ENCODE measurements at regions of chr21 and their contacts with region 1.

Region 1: GRCh38 chr21:44962403-44962966 is 22.7 kb downstream of the SLX9 start:
- DNase-seq: no peak
- H3K4me3 ChIP-seq: no peak overlapping the region
- H3K27ac ChIP-seq: no peak overlapping the region
- H3K4me1 ChIP-seq: peaks cover 26% of the 10 kb centered on the region
- H3K27me3 ChIP-seq: no peaks in the 10 kb centered on the region
- CTCF ChIP-seq: no peak
- EP300 ChIP-seq: no peak
- POLR2A ChIP-seq: no peak

Region 2: GRCh38 chr21:44817506-44817880 is 145.0 kb before region 1 on chr21:
- intact Hi-C with region 1: no loop called
- DNase-seq: peak; percentile 92 to 96 (median 94)
- H3K4me3 ChIP-seq: peak overlapping the region; percentile 59
- H3K27ac ChIP-seq: peak overlapping the region in 1 of 2 donors; percentile 93
- H3K4me1 ChIP-seq: peaks cover 14% of the 10 kb centered on the region
- H3K27me3 ChIP-seq: no peaks in the 10 kb centered on the region
- CTCF ChIP-seq: no peak
- EP300 ChIP-seq: no peak
- POLR2A ChIP-seq: no peak

Region 3: DNA sequence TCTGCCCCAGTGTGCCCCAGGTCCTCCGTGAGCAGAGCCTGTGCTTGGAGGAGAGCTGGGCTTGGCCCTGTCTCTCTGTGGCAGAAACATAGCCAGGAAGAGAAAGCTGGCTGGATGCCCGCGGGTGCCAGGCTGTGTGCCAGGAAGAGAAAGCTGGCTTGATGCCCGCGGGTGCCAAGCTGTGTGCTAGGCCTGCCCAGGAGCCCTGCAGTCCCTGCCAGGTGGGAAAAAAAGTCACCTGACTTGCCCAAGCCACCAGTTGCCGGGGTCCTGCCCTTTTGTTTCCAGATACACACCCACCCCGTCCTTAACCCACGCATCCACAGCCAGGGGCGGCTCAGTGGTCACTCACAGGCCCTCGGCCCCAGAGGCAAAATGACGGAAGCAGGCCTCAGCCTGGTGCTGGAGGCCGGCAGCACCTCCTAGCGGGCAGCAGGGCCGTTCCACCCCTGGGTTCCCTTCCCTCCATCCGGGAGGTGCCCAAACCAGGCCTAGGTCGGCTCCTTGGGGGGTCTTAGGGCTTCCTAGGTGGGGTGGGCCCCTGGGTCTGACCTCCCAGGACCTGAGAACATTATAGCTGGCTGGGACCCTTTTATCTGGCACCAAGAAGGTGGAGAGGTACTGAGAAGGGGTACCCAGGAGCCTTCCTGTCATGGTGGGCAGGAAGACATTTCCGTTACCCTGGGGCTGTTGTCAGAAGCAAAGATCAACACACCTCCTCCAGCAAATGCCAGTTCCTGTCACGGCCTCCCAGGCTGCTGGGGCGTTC is 50.9 kb before region 1 on chr21:
- intact Hi-C with region 1: no loop called
- DNase-seq: peak in 2 of 5 donors; percentile 52 to 57
- H3K4me3 ChIP-seq: no peak overlapping the region
- H3K27ac ChIP-seq: no peak overlapping the region
- H3K4me1 ChIP-seq: peaks cover 5% of the 10 kb centered on the region
- H3K27me3 ChIP-seq: no peaks in the 10 kb centered on the region
- CTCF ChIP-seq: no peak
- EP300 ChIP-seq: no peak
- POLR2A ChIP-seq: no peak

Region 4: GRCh38 chr21:45033791-45034555 is 71.5 kb after region 1 on chr21:
- intact Hi-C with region 1: loop called in 2 of 4 experiments (anchors 5 to 10 kb)
- DNase-seq: peak in 2 of 5 donors; percentile 22 to 49
- H3K4me3 ChIP-seq: no peak overlapping the region
- H3K27ac ChIP-seq: peak overlapping the region in 1 of 2 donors; percentile 26
- H3K4me1 ChIP-seq: peaks cover 20% of the 10 kb centered on the region
- H3K27me3 ChIP-seq: no peaks in the 10 kb centered on the region
- CTCF ChIP-seq: no peak
- EP300 ChIP-seq: no peak
- POLR2A ChIP-seq: no peak

Region 5: GRCh38 chr21:45074048-45074817 is 111.7 kb after region 1 on chr21 and contains the start of gene ADARB1:
- intact Hi-C with region 1: loop called in 1 of 4 experiments (anchors 5 kb)
- DNase-seq: peak; percentile 54 to 80 (median 75)
- H3K4me3 ChIP-seq: peak within 1 kb of the TSS; percentile 93
- H3K27ac ChIP-seq: peak within 1 kb of the TSS; percentile 88 to 97
- H3K4me1 ChIP-seq: peaks cover 3% of the 10 kb centered on the region
- H3K27me3 ChIP-seq: no peaks in the 10 kb centered on the region
- CTCF ChIP-seq: no peak
- EP300 ChIP-seq: no peak
- POLR2A ChIP-seq: peak; percentile 59
- total RNA-seq, gene ADARB1: 6.4 to 23.7 (median 16.3) TPM

Measured in ovary (tissue), 10 donors.